Heart left ventricle (tissue), 16 donors: ENCODE measurements at regions of chr10 and their contacts with region 1.

Region 1: DNA sequence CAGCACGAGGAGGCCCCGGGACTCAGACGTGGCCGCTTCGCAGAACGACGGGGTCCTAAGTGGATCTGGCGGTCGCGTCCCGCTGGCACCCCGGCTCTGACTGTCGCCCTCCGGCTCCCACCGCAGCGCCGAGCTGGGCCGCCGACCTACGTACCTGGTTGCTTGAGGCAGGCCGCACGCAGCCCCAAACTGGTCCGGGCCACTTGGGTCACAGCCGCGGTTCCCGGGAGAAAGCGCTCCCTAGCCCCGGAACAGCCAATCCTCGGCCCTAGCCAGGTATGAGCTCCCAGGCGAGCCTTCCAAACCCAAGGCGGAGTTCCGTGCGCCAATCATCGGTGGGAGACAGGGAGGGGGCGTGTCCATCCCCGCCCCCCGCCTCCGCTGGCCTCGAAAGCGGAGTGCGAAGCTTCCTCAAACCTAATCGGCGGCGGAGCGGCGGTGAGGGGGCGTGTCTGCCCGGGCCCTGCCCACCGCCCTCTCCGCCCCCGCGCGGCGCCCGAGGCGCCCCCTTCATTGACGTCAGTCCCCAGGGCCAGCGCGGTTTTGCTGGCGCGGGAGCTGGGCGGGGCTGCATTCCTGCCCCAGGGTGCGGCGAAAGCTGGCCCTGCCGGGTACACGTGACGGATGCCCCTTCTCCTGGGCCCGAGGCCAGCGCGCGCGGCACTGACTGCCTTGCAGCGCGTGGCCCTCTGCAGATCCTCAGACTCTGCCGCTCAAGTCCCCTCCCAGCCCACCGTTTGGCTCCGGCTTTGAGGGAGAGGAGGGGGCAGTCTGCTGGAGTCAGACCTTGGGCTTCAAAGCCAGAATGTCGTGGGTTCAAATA is at the start of gene AVPI1:
- DNase-seq: peak; percentile 97 to 99 (median 98)
- ATAC-seq: peak; percentile 92 to 96 (median 95)
- H3K4me3 ChIP-seq: peak within 1 kb of the TSS; percentile 49 to 86 (median 74)
- H3K27ac ChIP-seq: peak within 1 kb of the TSS; percentile 76 to 93 (median 86)
- H3K4me1 ChIP-seq: peaks cover 0 to 73% (median 45%) of the 10 kb centered on the region in 12 donors
- H3K27me3 ChIP-seq: no peaks in the 10 kb centered on the region
- CTCF ChIP-seq: no peak
- POLR2A ChIP-seq: peak; percentile 87 to 99
- total RNA-seq, gene AVPI1: 7.0 to 13.0 (median 9.9) TPM

Region 2: GRCh38 chr10:96850825-96851224 is 836.3 kb before region 1 on chr10:
- intact Hi-C with region 1: no loop called
- DNase-seq: no peak
- ATAC-seq: peak in 3 of 4 donors; percentile 44 to 90 (median 75)
- H3K4me3 ChIP-seq: no peak overlapping the region
- H3K27ac ChIP-seq: peak overlapping the region in 1 of 12 donors; percentile 11
- H3K4me1 ChIP-seq: peaks cover 0 to 38% (median 15%) of the 10 kb centered on the region in 12 donors
- H3K27me3 ChIP-seq: no peaks in the 10 kb centered on the region
- CTCF ChIP-seq: no peak
- POLR2A ChIP-seq: no peak

Region 3: GRCh38 chr10:97640174-97640867 is 46.9 kb before region 1 on chr10 and contains the start of gene PI4K2A:
- intact Hi-C with region 1: loop called in 1 of 10 experiments (anchors 5 kb)
- DNase-seq: peak; percentile 99 to 100 (median 99)
- ATAC-seq: peak; percentile 99 to 100 (median 100)
- H3K4me3 ChIP-seq: peak within 1 kb of the TSS; percentile 32 to 93 (median 84)
- H3K27ac ChIP-seq: peak within 1 kb of the TSS; percentile 41 to 90 (median 78)
- H3K4me1 ChIP-seq: peaks cover 0 to 21% (median 12%) of the 10 kb centered on the region in 12 donors
- H3K27me3 ChIP-seq: no peaks in the 10 kb centered on the region
- CTCF ChIP-seq: no peak
- POLR2A ChIP-seq: peak; percentile 70 to 92
- total RNA-seq, gene PI4K2A: 10.4 to 24.2 (median 17.3) TPM

Region 4: DNA sequence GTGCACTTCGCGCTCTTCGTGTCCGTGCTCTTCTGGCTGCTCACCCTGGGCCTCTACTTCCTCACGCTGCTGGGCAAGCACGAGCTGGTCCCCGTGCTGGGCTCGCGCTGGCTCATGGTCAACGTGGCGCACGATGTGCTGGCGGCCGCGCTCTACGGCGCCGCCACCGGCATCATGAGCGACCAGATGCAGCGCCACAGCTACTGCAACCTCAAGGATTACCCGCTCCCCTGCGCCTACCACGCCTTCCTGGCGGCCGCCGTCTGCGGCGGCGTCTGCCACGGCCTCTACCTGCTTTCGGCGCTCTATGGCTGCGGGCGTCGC is 26.8 kb after region 1 on chr10:
- intact Hi-C with region 1: loop called in 1 of 10 experiments (anchors 1 kb)
- DNase-seq: peak; percentile 72 to 84 (median 76)
- ATAC-seq: peak in 3 of 4 donors; percentile 70 to 79 (median 70)
- H3K4me3 ChIP-seq: peak overlapping the region; percentile 50 to 86 (median 68)
- H3K27ac ChIP-seq: peak overlapping the region; percentile 81 to 98 (median 92)
- H3K4me1 ChIP-seq: peaks cover 0 to 68% (median 33%) of the 10 kb centered on the region in 12 donors
- H3K27me3 ChIP-seq: no peaks in the 10 kb centered on the region
- CTCF ChIP-seq: peak in 5 of 12 donors; percentile 22 to 40 (median 30)
- POLR2A ChIP-seq: no peak